Ovary (tissue), 10 donors: ENCODE measurements at regions of chr2 and their contacts with region 1.

Region 1: GRCh38 chr2:180716186-180717180 is 263.9 kb upstream of the UBE2E3 start:
- DNase-seq: no peak
- H3K4me3 ChIP-seq: no peak overlapping the region
- H3K27ac ChIP-seq: no peak overlapping the region
- H3K4me1 ChIP-seq: no peaks in the 10 kb centered on the region
- H3K27me3 ChIP-seq: no peaks in the 10 kb centered on the region
- CTCF ChIP-seq: no peak
- EP300 ChIP-seq: no peak
- POLR2A ChIP-seq: no peak

Region 2: GRCh38 chr2:179837408-179837807 is 879.1 kb before region 1 on chr2:
- intact Hi-C with region 1: loop called in 1 of 4 experiments (anchors 5 kb)
- DNase-seq: no peak
- H3K4me3 ChIP-seq: no peak overlapping the region
- H3K27ac ChIP-seq: no peak overlapping the region
- H3K4me1 ChIP-seq: no peaks in the 10 kb centered on the region
- H3K27me3 ChIP-seq: no peaks in the 10 kb centered on the region
- CTCF ChIP-seq: no peak
- EP300 ChIP-seq: no peak
- POLR2A ChIP-seq: no peak

Region 3: DNA sequence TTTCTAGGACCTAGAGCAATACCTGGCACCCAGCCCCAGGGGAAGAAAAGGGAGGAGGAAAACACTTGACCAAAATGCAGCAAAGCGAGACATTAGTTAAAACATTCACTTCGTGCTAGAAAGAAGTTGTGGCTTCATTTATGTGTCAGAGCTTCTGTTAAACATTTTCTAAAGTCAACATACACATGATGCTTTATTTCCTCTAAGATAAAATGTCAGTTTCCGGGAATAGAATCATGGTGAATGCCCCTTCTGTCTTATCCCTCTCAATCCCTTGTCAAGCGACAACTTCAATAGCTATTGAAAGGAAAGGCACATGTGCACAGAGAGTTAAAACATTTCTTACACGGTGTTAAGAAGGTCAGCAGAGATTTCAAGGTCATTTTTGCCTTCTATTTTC is 304.8 kb before region 1 on chr2:
- intact Hi-C with region 1: no loop called
- DNase-seq: no peak
- H3K4me3 ChIP-seq: no peak overlapping the region
- H3K27ac ChIP-seq: no peak overlapping the region
- H3K4me1 ChIP-seq: no peaks in the 10 kb centered on the region
- H3K27me3 ChIP-seq: no peaks in the 10 kb centered on the region
- CTCF ChIP-seq: no peak
- EP300 ChIP-seq: no peak
- POLR2A ChIP-seq: no peak